T-cell (primary cell): ENCODE measurements at regions of chr11 and their contacts with region 1.

Region 1: GRCh38 chr11:36354221-36355003 is 58.3 kb downstream of the PRR5L start:
- DNase-seq: no peak
- ATAC-seq: no peak
- H3K4me3 ChIP-seq: no peak overlapping the region
- H3K4me3 Mint-ChIP-seq: no peak overlapping the region
- H3K27ac ChIP-seq: no peak overlapping the region
- H3K27ac Mint-ChIP-seq: no peak overlapping the region
- H3K4me1 ChIP-seq: peaks cover 3 to 14% of the 10 kb centered on the region in 2 experiments
- H3K4me1 Mint-ChIP-seq: peaks cover 21 to 72% (median 28%) of the 10 kb centered on the region in 3 donors
- H3K27me3 ChIP-seq: no peaks in the 10 kb centered on the region
- H3K27me3 Mint-ChIP-seq: peaks cover 13 to 21% of the 10 kb centered on the region in 2 donors

Region 2: GRCh38 chr11:36289226-36289852 is 65.1 kb before region 1 on chr11 and contains the start of gene COMMD9:
- CTCF ChIA-PET with region 1: interaction called in 1 of 2 experiments, 11 read pairs
- POLR2A ChIA-PET with region 1: no interaction called
- DNase-seq: peak; percentile 84 to 97 (median 92)
- ATAC-seq: peak; percentile 98 to 99 (median 98)
- H3K4me3 ChIP-seq: peak within 1 kb of the TSS; percentile 67 to 93
- H3K4me3 Mint-ChIP-seq: peak within 1 kb of the TSS; percentile 84 to 94 (median 94)
- H3K27ac ChIP-seq: peak within 1 kb of the TSS; percentile 15
- H3K27ac Mint-ChIP-seq: peak within 1 kb of the TSS; percentile 88 to 93
- H3K4me1 ChIP-seq: peaks cover 5 to 13% of the 10 kb centered on the region in 2 experiments
- H3K4me1 Mint-ChIP-seq: peaks cover 43 to 56% (median 49%) of the 10 kb centered on the region in 3 donors
- H3K27me3 ChIP-seq: no peaks in the 10 kb centered on the region
- H3K27me3 Mint-ChIP-seq: no peaks in the 10 kb centered on the region
- total RNA-seq, gene COMMD9: 37.8 to 48.0 (median 40.3) TPM

Region 3: GRCh38 chr11:36385121-36385970 is 30.9 kb after region 1 on chr11:
- CTCF ChIA-PET with region 1: interaction called in 1 of 2 experiments, 19 read pairs
- POLR2A ChIA-PET with region 1: no interaction called
- DNase-seq: peak in 1 of 35 experiments; percentile 51
- ATAC-seq: peak; percentile 51 to 74 (median 58)
- H3K4me3 ChIP-seq: no peak overlapping the region
- H3K4me3 Mint-ChIP-seq: peak overlapping the region in 2 of 3 donors; percentile 11 to 22
- H3K27ac ChIP-seq: peak overlapping the region; percentile 45
- H3K27ac Mint-ChIP-seq: peak overlapping the region; percentile 35 to 84
- H3K4me1 ChIP-seq: peaks cover 0 to 39% of the 10 kb centered on the region in 2 experiments
- H3K4me1 Mint-ChIP-seq: peaks cover 12 to 63% (median 25%) of the 10 kb centered on the region in 3 donors
- H3K27me3 ChIP-seq: no peaks in the 10 kb centered on the region
- H3K27me3 Mint-ChIP-seq: peaks cover 3 to 10% of the 10 kb centered on the region in 2 donors

Region 4: GRCh38 chr11:36478700-36479329 is 124.4 kb after region 1 on chr11:
- CTCF ChIA-PET with region 1: interaction called, 3 to 40 read pairs
- POLR2A ChIA-PET with region 1: no interaction called
- DNase-seq: peak in 14 of 35 experiments; percentile 8 to 65 (median 17)
- ATAC-seq: no peak
- H3K4me3 ChIP-seq: no peak overlapping the region
- H3K4me3 Mint-ChIP-seq: no peak overlapping the region
- H3K27ac ChIP-seq: no peak overlapping the region
- H3K27ac Mint-ChIP-seq: no peak overlapping the region
- H3K4me1 ChIP-seq: peaks cover 0 to 4% of the 10 kb centered on the region in 2 experiments
- H3K4me1 Mint-ChIP-seq: peaks cover 0 to 6% (median 5%) of the 10 kb centered on the region in 3 donors
- H3K27me3 ChIP-seq: no peaks in the 10 kb centered on the region
- H3K27me3 Mint-ChIP-seq: no peaks in the 10 kb centered on the region

Region 5: DNA sequence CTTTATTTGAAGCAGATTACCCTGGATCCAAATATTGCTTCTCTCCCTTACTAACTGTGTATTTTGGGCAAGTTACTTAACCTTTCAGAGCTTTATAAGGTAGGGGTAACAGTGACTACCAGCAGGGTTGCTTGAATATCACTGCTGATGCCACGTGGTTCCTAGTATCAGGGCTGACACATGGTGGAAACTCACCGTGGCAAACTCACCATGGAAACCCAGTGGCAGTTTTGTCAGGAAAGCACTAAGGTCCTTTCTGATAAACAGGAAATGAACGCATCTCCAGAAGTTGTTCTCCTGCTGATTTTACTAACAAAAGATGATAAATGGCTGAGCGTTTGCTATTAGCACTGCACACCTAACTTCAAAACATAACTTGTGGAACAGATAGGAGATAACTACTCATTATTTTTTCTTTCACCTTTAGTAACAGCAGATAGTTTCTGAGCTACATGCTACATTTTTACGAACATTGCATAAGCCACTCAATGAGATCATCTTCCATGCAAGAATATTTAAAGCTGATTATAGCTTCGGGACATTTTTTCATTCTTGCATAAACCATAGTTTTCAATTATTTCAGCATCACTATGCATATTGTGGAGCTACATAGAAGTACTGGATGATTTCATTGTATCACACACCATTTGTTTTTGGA is 303.3 kb after region 1 on chr11:
- CTCF ChIA-PET with region 1: no interaction called
- POLR2A ChIA-PET with region 1: no interaction called
- DNase-seq: no peak
- ATAC-seq: no peak
- H3K4me3 ChIP-seq: no peak overlapping the region
- H3K4me3 Mint-ChIP-seq: no peak overlapping the region
- H3K27ac ChIP-seq: no peak overlapping the region
- H3K27ac Mint-ChIP-seq: no peak overlapping the region
- H3K4me1 ChIP-seq: no peaks in the 10 kb centered on the region
- H3K4me1 Mint-ChIP-seq: no peaks in the 10 kb centered on the region
- H3K27me3 ChIP-seq: no peaks in the 10 kb centered on the region
- H3K27me3 Mint-ChIP-seq: no peaks in the 10 kb centered on the region